ENCODE measurements at regions of chr10 and their contacts with region 1.

Region 1: DNA sequence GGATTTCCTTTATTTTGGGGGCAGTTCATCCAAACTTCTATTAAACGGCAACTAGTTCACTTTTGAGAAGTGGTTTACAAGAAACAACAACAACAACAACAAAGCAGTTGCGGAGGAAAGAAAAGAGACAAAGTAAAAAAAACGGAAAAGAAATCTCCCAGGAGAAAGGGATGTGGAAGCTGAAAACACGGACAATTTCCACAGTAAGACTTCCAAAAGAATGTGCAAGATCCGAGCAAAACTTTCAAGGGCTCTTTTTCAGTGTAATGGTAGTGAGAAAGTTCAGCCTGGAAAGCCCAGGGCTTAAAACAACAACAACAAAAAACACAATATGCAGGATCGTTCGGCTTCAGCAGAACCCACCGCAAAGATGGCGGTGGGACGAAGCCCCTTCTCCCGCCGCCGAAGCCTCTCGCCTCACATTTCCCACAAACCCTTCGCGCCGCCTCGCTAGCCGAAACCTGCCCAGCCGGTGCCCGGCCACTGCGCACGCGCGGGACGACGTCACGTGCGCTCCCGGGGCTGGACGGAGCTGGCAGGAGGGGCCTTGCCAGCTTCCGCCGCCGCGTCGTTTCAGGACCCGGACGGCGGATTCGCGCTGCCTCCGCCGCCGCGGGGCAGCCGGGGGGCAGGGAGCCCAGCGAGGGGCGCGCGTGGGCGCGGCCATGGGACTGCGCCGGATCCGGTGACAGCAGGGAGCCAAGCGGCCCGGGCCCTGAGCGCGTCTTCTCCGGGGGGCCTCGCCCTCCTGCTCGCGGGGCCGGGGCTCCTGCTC is at the start of gene TNKS2:
- DNase-seq: peak; percentile 96
- H3K4me3 ChIP-seq: peak within 1 kb of the TSS; percentile 85
- H3K27ac ChIP-seq: peak within 1 kb of the TSS; percentile 84
- H3K4me1 ChIP-seq: peaks cover 33% of the 10 kb centered on the region
- CTCF ChIP-seq: no peak
- total RNA-seq, gene TNKS2: 18.0 and 20.0 TPM in 2 replicates

Region 2: DNA sequence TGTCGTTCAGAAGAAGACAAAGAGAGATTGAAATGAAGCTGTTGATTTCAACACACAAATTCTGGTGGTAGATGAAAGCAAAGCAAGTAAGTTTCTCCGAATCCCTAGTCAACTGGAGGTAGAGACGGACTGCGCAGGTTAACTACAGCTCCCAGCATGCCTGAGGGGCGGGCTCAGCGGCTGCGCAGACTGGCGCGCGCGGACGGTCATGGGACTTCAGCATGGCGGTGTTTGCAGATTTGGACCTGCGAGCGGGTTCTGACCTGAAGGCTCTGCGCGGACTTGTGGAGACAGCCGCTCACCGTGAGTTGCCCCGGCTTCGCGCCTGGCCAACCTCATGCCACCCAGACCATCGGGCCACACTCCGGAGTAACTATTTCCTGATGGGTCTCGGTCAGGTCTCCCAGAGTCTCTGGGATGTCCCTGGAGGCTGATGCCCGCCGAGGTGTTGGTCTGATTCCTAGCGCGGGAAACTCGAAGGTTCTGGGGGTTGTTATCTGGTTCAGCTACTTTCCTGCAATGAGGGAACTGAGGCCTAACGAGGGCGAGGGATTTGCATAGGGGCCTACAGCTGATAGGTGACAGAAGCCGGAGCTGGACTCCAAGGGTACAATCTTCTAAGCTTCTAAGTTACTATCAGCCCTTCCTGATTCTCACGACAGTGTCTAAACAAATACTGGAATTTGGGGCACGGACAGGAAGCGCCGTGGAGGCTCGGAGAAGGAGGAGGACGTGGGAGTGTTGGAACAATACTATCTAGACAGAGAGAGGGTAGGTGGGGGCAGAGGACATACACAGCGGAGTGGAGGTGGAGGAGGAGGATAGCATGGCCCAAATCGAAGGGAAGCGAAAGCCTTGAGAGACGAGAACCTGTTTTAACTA is 926.1 kb before region 1 on chr10 and contains the start of gene RPP30:
- CTCF ChIA-PET with region 1: no interaction called
- POLR2A ChIA-PET with region 1: no interaction called
- intact Hi-C with region 1: loop called (anchors 10 kb)
- DNase-seq: peak; percentile 79
- H3K4me3 ChIP-seq: peak within 1 kb of the TSS; percentile 89
- H3K27ac ChIP-seq: peak within 1 kb of the TSS; percentile 52
- H3K4me1 ChIP-seq: peaks cover 13% of the 10 kb centered on the region
- CTCF ChIP-seq: no peak
- total RNA-seq, gene RPP30: 32.8 and 34.3 TPM in 2 replicates

Region 3: GRCh38 chr10:91210435-91210834 is 587.6 kb before region 1 on chr10:
- CTCF ChIA-PET with region 1: no interaction called
- POLR2A ChIA-PET with region 1: no interaction called
- intact Hi-C with region 1: loop called (anchors 10 kb)
- DNase-seq: peak; percentile 90
- H3K4me3 ChIP-seq: peak overlapping the region; percentile 12
- H3K27ac ChIP-seq: peak overlapping the region; percentile 74
- H3K4me1 ChIP-seq: peaks cover 65% of the 10 kb centered on the region
- CTCF ChIP-seq: no peak

Region 4: DNA sequence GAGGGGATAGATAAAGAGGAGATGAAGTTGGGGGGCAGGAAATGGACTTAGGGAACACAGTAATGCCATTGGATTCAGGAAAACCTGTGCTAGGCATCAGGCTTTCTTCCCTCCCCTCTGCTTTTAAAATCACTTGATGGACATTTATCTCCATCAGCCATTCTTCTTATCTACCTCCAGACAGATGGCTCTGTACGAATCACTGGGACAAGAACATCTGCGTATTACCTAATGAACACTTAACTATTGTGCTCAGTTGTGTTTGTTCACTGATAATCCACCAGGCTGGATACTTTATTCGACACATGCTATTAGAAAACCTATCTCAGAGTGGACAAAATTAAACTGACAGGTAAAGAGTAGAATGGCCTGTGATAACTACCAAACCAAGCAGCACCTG is 40.1 kb after region 1 on chr10:
- CTCF ChIA-PET with region 1: no interaction called
- POLR2A ChIA-PET with region 1: no interaction called
- intact Hi-C with region 1: no loop called
- DNase-seq: no peak
- H3K4me3 ChIP-seq: no peak overlapping the region
- H3K27ac ChIP-seq: no peak overlapping the region
- H3K4me1 ChIP-seq: no peaks in the 10 kb centered on the region
- CTCF ChIP-seq: no peak

Region 5: DNA sequence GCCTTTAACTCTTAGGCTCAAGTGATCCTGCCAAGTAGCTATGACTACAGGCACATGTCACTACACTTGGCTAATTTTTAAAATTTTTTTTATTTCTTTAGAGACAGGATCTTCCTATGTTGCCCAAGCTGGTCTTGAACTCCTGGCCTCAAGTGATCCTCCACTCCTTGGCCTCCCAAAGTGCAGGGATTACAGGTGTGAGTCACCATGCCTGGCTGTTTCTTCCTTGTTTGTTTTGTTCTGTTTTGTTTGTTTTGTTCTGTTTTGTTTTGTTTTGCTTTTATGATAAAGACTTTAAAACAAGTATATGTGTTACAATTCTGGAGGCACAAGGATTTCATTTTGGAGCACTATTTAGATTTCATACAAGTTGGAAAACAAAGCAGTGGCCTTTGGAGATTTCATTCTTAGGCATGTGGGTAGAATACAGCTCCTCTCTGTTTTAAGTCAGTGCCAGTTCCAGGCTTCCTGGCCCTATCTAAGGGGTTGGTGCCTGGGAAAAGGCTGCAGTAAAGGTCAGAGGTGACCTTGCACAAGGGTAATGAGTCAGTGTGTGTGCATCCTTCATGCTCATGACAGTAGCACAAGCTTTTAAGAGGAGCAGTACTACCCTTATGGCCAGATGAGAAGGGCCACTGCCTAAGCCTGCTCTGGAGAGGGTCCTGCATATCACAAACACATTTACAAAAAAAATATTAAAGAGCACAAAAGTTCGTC is 93.4 kb after region 1 on chr10:
- CTCF ChIA-PET with region 1: no interaction called
- POLR2A ChIA-PET with region 1: no interaction called
- intact Hi-C with region 1: no loop called
- DNase-seq: no peak
- H3K4me3 ChIP-seq: no peak overlapping the region
- H3K27ac ChIP-seq: no peak overlapping the region
- H3K4me1 ChIP-seq: no peaks in the 10 kb centered on the region
- CTCF ChIP-seq: no peak

Region 6: GRCh38 chr10:91923371-91924211 is 125.5 kb after region 1 on chr10 and contains the start of gene BTAF1:
- CTCF ChIA-PET with region 1: no interaction called
- POLR2A ChIA-PET with region 1: interaction called, 11 read pairs
- intact Hi-C with region 1: loop called (anchors 2 kb)
- DNase-seq: peak; percentile 97
- H3K4me3 ChIP-seq: peak within 1 kb of the TSS; percentile 82
- H3K27ac ChIP-seq: peak within 1 kb of the TSS; percentile 73
- H3K4me1 ChIP-seq: peaks cover 27% of the 10 kb centered on the region
- CTCF ChIP-seq: no peak
- total RNA-seq, gene BTAF1: 95.6 and 100 TPM in 2 replicates

Region 7: DNA sequence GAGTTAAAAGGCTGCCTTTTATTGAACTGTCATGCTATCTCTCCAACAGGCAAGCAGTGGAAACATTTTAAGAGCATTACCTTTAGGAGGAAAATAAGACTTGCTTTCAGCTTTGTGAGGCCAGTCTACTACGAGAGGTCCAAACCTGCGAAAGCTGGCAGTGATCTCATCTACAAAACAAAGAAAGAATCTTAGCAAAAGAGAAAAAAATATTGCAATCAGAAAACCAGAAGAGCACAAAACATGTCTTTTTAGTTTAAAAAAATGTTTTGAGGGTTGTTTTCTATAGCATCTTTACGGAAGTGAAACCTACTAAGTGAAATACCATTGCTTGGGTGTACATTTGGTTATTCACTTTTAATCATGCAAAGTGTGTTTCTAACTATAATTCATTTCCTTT is 344.9 kb after region 1 on chr10:
- CTCF ChIA-PET with region 1: no interaction called
- POLR2A ChIA-PET with region 1: no interaction called
- intact Hi-C with region 1: loop called (anchors 5 kb)
- DNase-seq: peak; percentile 60
- H3K4me3 ChIP-seq: peak overlapping the region; percentile 59
- H3K27ac ChIP-seq: peak overlapping the region; percentile 78
- H3K4me1 ChIP-seq: peaks cover 61% of the 10 kb centered on the region
- CTCF ChIP-seq: no peak

Region 8: DNA sequence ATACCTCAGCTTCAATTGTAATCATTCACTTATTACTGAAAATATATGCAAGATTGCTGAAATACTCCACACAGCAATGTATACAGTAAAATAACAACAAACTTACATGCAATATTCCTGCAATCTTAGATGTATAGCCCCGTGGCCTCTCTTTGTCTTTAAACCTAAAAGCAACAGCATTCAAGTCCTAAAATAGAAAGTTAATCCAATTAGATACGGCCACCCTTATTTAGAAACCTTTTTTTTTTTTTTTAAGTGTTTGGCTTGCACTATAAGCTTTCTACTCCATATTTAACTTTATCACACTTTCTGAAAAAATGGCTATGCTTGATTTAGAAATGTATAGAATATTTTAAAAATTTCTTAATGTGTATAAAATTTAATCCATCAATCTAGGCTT is 708.3 kb after region 1 on chr10:
- CTCF ChIA-PET with region 1: no interaction called
- POLR2A ChIA-PET with region 1: no interaction called
- intact Hi-C with region 1: no loop called
- DNase-seq: no peak
- H3K4me3 ChIP-seq: no peak overlapping the region
- H3K27ac ChIP-seq: no peak overlapping the region
- H3K4me1 ChIP-seq: no peaks in the 10 kb centered on the region
- CTCF ChIP-seq: no peak

Measured in OCI-LY7 (cell line).